AG04450 (cell line): ENCODE measurements at regions of chr2 and their contacts with region 1.

Region 1: GRCh38 chr2:172985139-172985901 is 90.3 kb upstream of the MAP3K20 start:
- DNase-seq: no peak
- H3K4me3 ChIP-seq: no peak overlapping the region
- H3K27ac ChIP-seq: no peak overlapping the region
- H3K27me3 ChIP-seq: peaks cover 5% of the 10 kb centered on the region
- CTCF ChIP-seq: no peak

Region 2: GRCh38 chr2:172972005-172972619 is 13.2 kb before region 1 on chr2:
- CTCF ChIA-PET with region 1: interaction called, 13 read pairs
- POLR2A ChIA-PET with region 1: no interaction called
- DNase-seq: no peak
- H3K4me3 ChIP-seq: no peak overlapping the region
- H3K27ac ChIP-seq: no peak overlapping the region
- H3K27me3 ChIP-seq: no peaks in the 10 kb centered on the region
- CTCF ChIP-seq: peak; percentile 91